Caco-2 (cell line): ENCODE measurements at regions of chr16 and their contacts with region 1.

Region 1: DNA sequence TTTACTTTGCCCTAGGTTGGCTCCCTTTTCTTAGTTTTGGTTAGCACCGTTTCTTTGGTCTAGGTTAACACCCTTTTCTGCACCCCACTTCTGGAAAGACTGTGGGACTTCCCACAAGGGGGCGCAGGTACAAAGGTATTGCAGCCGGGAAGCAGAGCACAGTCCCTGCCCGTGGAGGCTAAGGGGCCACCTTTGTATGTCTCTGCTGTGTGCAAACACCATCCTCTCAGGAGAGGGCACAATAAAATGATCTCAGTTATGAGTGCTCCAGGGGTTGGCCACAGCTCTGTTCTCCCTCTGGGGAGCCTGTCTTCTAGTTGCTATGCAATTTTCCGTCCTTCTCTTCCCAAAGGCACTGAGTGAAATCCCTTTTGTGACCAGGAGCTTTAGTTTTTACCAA is 28.4 kb upstream of the TMC5 start:
- DNase-seq: peak; percentile 60 to 62
- H3K4me3 ChIP-seq: no peak overlapping the region
- H3K4me3 Mint-ChIP-seq: no peak overlapping the region
- H3K27ac Mint-ChIP-seq: no peak overlapping the region
- H3K4me1 ChIP-seq: peaks cover 8% of the 10 kb centered on the region; the same call in 1 of the 2 replicates
- H3K4me1 Mint-ChIP-seq: no peaks in the 10 kb centered on the region
- H3K27me3 ChIP-seq: no peaks in the 10 kb centered on the region
- H3K27me3 Mint-ChIP-seq: no peaks in the 10 kb centered on the region
- CTCF ChIP-seq: peak; percentile 53 to 78

Region 2: GRCh38 chr16:19113453-19114351 is 275.5 kb before region 1 on chr16 and contains the start of gene ITPRIPL2:
- CTCF ChIA-PET with region 1: no interaction called
- POLR2A ChIA-PET with region 1: no interaction called
- intact Hi-C with region 1: no loop called
- DNase-seq: peak; percentile 78 to 79
- H3K4me3 ChIP-seq: peak within 1 kb of the TSS; percentile 78
- H3K4me3 Mint-ChIP-seq: peak within 1 kb of the TSS; percentile 87
- H3K27ac Mint-ChIP-seq: peak within 1 kb of the TSS; percentile 91
- H3K4me1 ChIP-seq: peaks cover 27% of the 10 kb centered on the region
- H3K4me1 Mint-ChIP-seq: peaks cover 4% of the 10 kb centered on the region
- H3K27me3 ChIP-seq: no peaks in the 10 kb centered on the region
- H3K27me3 Mint-ChIP-seq: no peaks in the 10 kb centered on the region
- CTCF ChIP-seq: no peak
- total RNA-seq, gene ITPRIPL2: 24.5 TPM in 2 replicates

Region 3: DNA sequence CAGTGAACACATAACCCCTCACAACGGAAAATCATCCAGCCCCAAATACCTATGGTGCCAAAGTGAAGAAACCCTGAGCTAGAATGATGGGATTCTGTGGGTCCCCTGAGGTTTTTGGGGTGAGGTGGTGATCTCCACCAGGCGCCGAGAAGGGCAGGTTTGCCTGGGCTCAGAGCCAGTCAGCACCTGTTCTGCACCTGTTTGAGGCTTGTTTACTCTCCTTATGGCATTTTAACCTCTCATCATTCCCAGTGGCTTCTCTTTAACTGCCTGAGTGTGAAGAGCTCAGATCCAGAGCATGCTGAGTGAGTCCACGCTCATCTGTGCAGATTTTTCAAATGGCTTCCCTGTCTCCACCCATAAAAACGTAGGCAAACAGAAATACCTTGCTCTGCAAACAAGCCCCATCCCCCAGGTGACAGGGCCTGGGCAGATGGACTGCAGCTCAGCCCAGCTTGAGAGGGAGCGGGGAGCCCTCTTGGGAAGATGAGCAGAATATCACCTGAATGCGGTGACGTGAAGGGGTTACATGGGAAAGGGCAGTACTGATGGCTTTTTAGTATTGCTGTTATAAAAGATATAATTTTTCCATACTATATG is 143.8 kb before region 1 on chr16:
- CTCF ChIA-PET with region 1: no interaction called
- POLR2A ChIA-PET with region 1: no interaction called
- intact Hi-C with region 1: no loop called
- DNase-seq: peak; percentile 38 to 48
- H3K4me3 ChIP-seq: no peak overlapping the region
- H3K4me3 Mint-ChIP-seq: no peak overlapping the region
- H3K27ac Mint-ChIP-seq: no peak overlapping the region
- H3K4me1 ChIP-seq: no peaks in the 10 kb centered on the region
- H3K4me1 Mint-ChIP-seq: no peaks in the 10 kb centered on the region
- H3K27me3 ChIP-seq: no peaks in the 10 kb centered on the region
- H3K27me3 Mint-ChIP-seq: no peaks in the 10 kb centered on the region
- CTCF ChIP-seq: no peak

Region 4: DNA sequence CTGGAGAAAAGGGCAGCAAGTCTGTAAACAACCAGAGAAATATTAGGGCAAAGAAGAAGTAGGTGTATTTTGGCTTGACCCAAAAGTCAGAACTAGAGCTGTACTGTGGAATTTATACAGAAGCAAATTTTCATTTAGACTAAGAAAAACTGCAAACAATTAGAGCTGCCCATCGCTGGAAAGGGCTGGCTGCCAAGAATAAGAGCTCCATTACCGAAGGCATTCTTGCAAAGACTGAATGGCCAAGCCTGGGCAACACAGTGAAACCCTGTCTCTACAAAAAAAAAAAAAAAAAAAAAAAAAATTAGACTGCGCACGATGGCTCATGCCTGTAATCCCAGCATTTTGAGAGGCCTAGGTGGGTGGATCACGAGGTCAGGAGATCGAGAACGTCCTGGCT is 25.5 kb before region 1 on chr16:
- CTCF ChIA-PET with region 1: no interaction called
- POLR2A ChIA-PET with region 1: no interaction called
- intact Hi-C with region 1: no loop called
- DNase-seq: no peak
- H3K4me3 ChIP-seq: no peak overlapping the region
- H3K4me3 Mint-ChIP-seq: no peak overlapping the region
- H3K27ac Mint-ChIP-seq: no peak overlapping the region
- H3K4me1 ChIP-seq: peaks cover 13% of the 10 kb centered on the region; the same call in 1 of the 2 replicates
- H3K4me1 Mint-ChIP-seq: no peaks in the 10 kb centered on the region
- H3K27me3 ChIP-seq: no peaks in the 10 kb centered on the region
- H3K27me3 Mint-ChIP-seq: no peaks in the 10 kb centered on the region
- CTCF ChIP-seq: no peak

Region 5: GRCh38 chr16:19410435-19411161 is 21.4 kb after region 1 on chr16:
- CTCF ChIA-PET with region 1: no interaction called
- POLR2A ChIA-PET with region 1: interaction called, 3 read pairs
- intact Hi-C with region 1: loop called (anchors 2 kb)
- DNase-seq: peak; percentile 52 to 62
- H3K4me3 ChIP-seq: peak overlapping the region; percentile 55
- H3K4me3 Mint-ChIP-seq: peak overlapping the region; percentile 71
- H3K27ac Mint-ChIP-seq: no peak overlapping the region
- H3K4me1 ChIP-seq: no peaks in the 10 kb centered on the region
- H3K4me1 Mint-ChIP-seq: no peaks in the 10 kb centered on the region
- H3K27me3 ChIP-seq: no peaks in the 10 kb centered on the region
- H3K27me3 Mint-ChIP-seq: no peaks in the 10 kb centered on the region
- CTCF ChIP-seq: peak; percentile 12 to 40

Region 6: DNA sequence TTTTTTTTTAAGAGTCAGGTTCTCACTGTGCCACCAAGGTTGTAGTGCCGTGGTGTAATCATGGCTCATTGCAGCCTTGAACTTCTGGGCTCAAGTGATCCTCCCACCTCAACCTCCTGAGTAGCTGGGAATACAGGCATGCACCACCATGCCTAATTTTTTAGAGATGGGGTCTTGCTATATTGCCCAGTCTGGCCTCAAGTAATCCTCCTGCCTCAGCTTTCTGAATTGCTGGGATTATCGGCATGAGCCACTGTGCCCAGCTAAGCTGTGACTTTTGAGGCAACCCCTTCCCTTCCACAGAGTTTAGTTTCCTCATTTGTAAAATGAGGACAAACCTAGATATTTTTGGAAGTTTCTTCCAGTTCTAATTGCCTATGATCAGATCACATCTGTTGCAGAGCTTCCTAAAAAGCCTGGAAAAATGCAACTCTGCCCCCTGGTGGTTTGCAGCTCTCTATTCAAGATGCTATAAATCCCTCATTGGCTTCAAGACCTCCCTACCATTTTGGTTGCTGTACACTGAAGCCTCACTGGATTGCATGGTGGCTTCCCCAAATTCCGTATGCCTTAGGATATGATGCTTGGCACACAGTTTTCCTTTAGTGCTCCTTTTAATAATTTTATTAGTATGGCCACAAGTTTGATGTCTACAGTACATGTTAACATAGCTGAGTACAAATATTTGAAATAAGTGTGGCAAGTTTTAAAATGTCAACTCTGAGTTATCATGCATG is 113.3 kb after region 1 on chr16:
- CTCF ChIA-PET with region 1: interaction called, 9 read pairs
- POLR2A ChIA-PET with region 1: no interaction called
- intact Hi-C with region 1: loop called (anchors 1 kb)
- DNase-seq: peak; percentile 70 to 74
- H3K4me3 ChIP-seq: no peak overlapping the region
- H3K4me3 Mint-ChIP-seq: no peak overlapping the region
- H3K27ac Mint-ChIP-seq: no peak overlapping the region
- H3K4me1 ChIP-seq: 0 out of 2 replicates have a peak, but pooled peaks cover 4% of the 10 kb centered on the region
- H3K4me1 Mint-ChIP-seq: peaks cover 9% of the 10 kb centered on the region
- H3K27me3 ChIP-seq: no peaks in the 10 kb centered on the region
- H3K27me3 Mint-ChIP-seq: no peaks in the 10 kb centered on the region
- CTCF ChIP-seq: peak; percentile 69 to 72

Region 7: DNA sequence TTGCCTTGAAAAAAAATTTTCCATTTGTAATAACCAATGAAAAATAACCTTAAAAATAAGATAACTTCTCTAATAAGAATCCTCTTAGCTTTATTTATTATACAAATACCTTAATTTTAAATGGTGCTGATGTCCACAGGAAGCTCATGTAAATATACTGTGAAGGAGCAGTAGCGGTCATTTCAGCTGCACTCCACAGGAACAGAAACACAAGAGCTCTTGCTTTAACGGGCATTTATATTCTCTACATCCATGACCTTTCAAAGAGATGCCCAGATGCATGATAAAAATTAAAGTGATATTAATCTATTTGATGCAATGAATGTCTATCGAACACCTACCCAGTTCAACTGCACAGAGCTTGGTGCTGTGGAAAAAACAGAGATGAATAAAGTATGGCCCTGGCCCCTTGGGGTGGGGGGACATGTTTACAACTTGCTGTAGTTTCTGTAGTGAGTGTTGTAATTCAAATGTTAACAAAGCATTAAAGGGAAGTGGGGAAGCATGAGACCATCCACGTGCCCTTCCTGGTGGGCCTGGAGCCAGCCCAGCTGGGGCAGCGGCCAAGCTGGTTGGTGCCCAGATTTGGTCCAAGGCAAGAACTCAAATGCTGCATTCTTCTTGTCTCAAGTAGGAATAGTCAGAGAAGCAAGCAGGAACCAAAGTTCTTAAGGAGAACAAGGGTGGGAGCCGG is 376.8 kb after region 1 on chr16:
- CTCF ChIA-PET with region 1: no interaction called
- POLR2A ChIA-PET with region 1: no interaction called
- intact Hi-C with region 1: no loop called
- DNase-seq: no peak
- H3K4me3 ChIP-seq: no peak overlapping the region
- H3K4me3 Mint-ChIP-seq: no peak overlapping the region
- H3K27ac Mint-ChIP-seq: no peak overlapping the region
- H3K4me1 ChIP-seq: no peaks in the 10 kb centered on the region
- H3K4me1 Mint-ChIP-seq: no peaks in the 10 kb centered on the region
- H3K27me3 ChIP-seq: no peaks in the 10 kb centered on the region
- H3K27me3 Mint-ChIP-seq: no peaks in the 10 kb centered on the region
- CTCF ChIP-seq: no peak